ENCODE measurements at regions of chr7 and their contacts with region 1.

Region 1: GRCh38 chr7:36723951-36724664 is at the start of gene AOAH:
- DNase-seq: peak; percentile 87
- H3K4me3 Mint-ChIP-seq: peak within 1 kb of the TSS; percentile 70
- H3K27ac Mint-ChIP-seq: peak within 1 kb of the TSS; percentile 83
- H3K4me1 Mint-ChIP-seq: peaks cover 69% of the 10 kb centered on the region
- H3K27me3 Mint-ChIP-seq: no peaks in the 10 kb centered on the region
- total RNA-seq, gene AOAH: 2.4 to 2.6 TPM

Region 2: GRCh38 chr7:36677769-36678437 is 46.2 kb before region 1 on chr7:
- CTCF ChIA-PET with region 1: interaction called, 5 read pairs
- POLR2A ChIA-PET with region 1: interaction called, 6 read pairs
- intact Hi-C with region 1: loop called (anchors 1 kb)
- DNase-seq: peak; percentile 85
- H3K4me3 Mint-ChIP-seq: peak overlapping the region; percentile 24
- H3K27ac Mint-ChIP-seq: peak overlapping the region; percentile 74
- H3K4me1 Mint-ChIP-seq: peaks cover 39% of the 10 kb centered on the region
- H3K27me3 Mint-ChIP-seq: no peaks in the 10 kb centered on the region

Region 3: GRCh38 chr7:36692456-36692855 is 31.7 kb before region 1 on chr7:
- CTCF ChIA-PET with region 1: no interaction called
- POLR2A ChIA-PET with region 1: no interaction called
- intact Hi-C with region 1: loop called (anchors 1 kb)
- DNase-seq: peak; percentile 22
- H3K4me3 Mint-ChIP-seq: peak overlapping the region; percentile 18
- H3K27ac Mint-ChIP-seq: peak overlapping the region; percentile 39
- H3K4me1 Mint-ChIP-seq: peaks cover 31% of the 10 kb centered on the region
- H3K27me3 Mint-ChIP-seq: no peaks in the 10 kb centered on the region

Region 4: DNA sequence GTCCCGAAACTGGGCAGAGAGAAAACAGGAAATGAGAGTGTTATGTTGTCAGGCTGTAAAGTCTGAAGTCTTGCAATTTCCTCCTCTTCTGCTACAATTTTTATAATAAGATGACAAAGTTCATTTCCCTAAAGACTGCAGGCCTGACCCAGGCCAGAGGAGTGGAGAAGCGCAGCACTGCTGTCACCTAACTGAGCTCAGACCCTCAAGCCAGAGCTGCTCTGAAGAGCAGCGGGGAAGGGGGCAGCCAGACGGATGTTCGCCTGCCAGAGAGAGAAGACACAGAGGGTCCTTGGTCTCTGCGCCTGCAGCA is 12.7 kb after region 1 on chr7:
- CTCF ChIA-PET with region 1: interaction called, 3 read pairs
- POLR2A ChIA-PET with region 1: interaction called, 5 read pairs
- intact Hi-C with region 1: loop called (anchors 1 kb)
- DNase-seq: no peak
- H3K4me3 Mint-ChIP-seq: no peak overlapping the region
- H3K27ac Mint-ChIP-seq: no peak overlapping the region
- H3K4me1 Mint-ChIP-seq: peaks cover 28% of the 10 kb centered on the region
- H3K27me3 Mint-ChIP-seq: no peaks in the 10 kb centered on the region

Region 5: DNA sequence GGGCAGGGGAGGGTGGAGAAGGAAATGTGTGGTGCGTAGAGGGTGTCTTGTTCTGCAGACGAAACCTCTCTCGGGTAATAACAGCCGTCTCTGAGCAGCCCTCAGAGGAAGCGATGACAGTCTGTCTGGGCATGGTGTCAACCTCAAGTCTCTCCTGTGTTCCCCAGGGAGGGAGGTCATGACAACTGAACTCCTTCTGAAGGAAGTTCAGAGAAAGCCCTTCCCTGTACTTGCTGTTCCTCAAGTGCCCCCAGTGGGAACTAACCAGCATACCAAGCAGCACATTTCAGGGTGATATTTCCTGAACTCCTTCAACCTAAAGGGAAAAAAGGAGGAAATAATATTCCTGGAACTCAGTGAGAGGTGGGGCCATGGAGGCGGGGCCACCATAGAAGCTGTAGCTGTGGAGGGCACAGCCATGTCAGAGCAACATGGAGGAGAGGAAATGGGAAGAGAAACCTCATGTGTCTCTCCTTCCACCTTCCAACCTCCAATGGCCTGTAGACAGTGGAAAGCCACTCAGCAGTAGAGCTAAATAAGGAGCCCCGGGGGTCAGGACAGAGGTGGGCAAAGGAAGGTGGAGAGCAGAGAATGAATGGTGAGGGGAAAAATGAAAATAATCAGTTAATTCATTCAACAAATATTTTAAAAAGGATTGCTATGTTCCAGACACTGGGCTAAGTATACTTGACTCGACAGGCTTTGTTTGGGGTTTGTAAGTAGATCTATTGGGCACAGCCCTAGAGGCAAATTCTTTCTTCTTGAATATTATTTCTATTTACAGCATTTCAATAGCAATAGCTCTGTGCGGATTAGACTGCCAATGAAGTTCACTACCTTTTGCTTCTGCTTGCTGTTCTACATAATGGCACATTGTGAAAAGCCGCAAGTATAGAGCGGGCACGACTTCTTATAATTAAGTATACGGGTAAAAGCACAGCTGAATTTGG is 61.2 kb after region 1 on chr7:
- CTCF ChIA-PET with region 1: no interaction called
- POLR2A ChIA-PET with region 1: no interaction called
- intact Hi-C with region 1: loop called (anchors 2 kb)
- DNase-seq: peak; percentile 68
- H3K4me3 Mint-ChIP-seq: peak overlapping the region; percentile 4
- H3K27ac Mint-ChIP-seq: peak overlapping the region; percentile 47
- H3K4me1 Mint-ChIP-seq: peaks cover 75% of the 10 kb centered on the region
- H3K27me3 Mint-ChIP-seq: no peaks in the 10 kb centered on the region

Region 6: GRCh38 chr7:36838616-36839225 is 114.6 kb after region 1 on chr7:
- CTCF ChIA-PET with region 1: no interaction called
- POLR2A ChIA-PET with region 1: no interaction called
- intact Hi-C with region 1: no loop called
- DNase-seq: no peak
- H3K4me3 Mint-ChIP-seq: no peak overlapping the region
- H3K27ac Mint-ChIP-seq: no peak overlapping the region
- H3K4me1 Mint-ChIP-seq: no peaks in the 10 kb centered on the region
- H3K27me3 Mint-ChIP-seq: no peaks in the 10 kb centered on the region

Region 7: DNA sequence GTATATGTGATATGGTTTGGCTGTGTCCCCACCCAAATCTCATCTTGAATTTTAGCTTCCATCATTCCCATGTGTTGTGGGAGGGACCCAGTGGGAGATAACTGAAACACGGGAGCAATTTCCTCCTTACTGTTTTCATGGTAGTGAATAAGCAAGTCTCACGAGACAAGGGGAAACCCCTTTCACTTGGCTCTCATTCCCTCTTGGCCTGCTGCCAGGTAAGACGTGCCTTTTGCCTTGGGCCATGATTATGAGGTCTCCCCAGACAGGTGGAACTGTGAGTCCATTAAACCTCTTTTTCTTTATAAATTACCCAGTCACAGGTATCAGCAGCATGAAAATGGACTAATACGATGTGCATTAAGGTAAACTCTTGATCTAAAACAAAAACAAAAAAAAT is 357.3 kb after region 1 on chr7:
- CTCF ChIA-PET with region 1: no interaction called
- POLR2A ChIA-PET with region 1: no interaction called
- intact Hi-C with region 1: no loop called
- DNase-seq: peak; percentile 57
- H3K4me3 Mint-ChIP-seq: no peak overlapping the region
- H3K27ac Mint-ChIP-seq: no peak overlapping the region
- H3K4me1 Mint-ChIP-seq: peaks cover 21% of the 10 kb centered on the region
- H3K27me3 Mint-ChIP-seq: no peaks in the 10 kb centered on the region

Measured in activated CD4-positive, alpha-beta memory T cell treated with anti-CD3 and anti-CD28 coated beads for 36 hours (primary cell).